Right ventricle myocardium superior (tissue), 1 donor: ENCODE measurements at regions of chr3 and their contacts with region 1.

Region 1: DNA sequence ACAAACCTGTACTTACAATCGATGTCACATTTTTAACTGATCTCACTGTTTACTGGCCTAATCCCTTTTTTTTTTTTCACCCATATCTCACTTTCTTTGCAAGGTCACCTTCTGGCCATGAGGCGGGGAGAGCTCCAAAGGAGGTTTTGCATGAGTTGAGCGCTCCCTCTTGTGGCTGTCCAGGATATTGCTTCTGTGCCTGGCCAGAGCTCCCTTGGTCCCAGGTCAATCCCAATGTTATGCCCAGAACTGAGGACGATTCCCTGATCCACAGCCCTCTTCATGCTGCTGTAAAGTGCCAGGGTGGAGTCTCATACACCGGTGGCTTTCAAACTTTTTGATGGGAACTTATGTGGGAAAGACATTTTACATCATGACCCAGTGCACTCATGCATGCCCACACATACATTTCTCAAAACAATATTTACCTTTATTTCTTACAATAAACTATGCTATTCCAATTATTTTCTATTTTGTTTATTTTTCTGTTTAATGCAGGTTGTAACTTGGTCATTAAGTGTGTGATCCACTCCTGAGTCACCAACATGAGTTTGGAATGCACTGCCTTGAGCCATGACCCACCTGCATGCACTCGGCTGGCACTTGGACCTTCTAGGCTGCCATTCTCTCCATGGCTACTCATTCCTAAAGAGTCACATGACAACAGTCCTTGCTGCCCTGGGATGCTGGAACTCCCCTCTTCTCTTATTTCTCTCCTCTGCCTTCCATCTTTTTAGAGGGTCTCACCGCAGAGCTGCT is 9.6 kb upstream of the SST start:
- DNase-seq: peak; percentile 81
- ATAC-seq: peak; percentile 98

Region 2: GRCh38 chr3:187112934-187113793 is 566.7 kb before region 1 on chr3:
- intact Hi-C with region 1: loop called (anchors 10 kb)
- DNase-seq: no peak
- ATAC-seq: no peak

Region 3: DNA sequence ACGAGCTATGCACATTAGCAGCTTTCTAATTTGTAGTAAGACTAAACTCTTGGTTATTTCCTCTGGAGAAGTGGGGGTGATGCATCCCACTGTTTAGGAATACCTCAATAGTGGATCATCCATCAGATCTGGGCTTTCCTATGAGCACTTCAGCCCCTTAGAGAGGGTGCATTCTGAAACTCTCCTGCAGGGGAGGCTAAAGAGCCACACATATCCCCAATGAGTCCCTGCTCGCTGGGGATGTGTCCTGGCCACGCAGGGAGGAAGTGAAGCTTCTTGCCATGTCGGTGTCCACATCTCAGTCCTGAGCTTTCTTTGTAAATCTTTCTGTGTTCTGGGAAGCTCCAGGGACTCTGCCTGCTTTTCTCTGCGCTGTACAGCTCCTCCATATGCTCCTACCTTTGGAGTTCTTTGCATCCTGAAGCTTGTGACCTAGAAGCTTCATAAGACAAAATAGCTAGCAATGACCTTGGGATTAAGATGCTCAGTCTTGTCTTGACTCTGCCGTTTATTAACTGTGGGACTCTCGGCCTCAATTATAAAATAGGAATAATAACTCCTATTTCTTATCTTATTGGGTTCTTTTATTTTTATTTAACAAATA is 360.0 kb before region 1 on chr3:
- intact Hi-C with region 1: loop called (anchors 2 kb)
- DNase-seq: peak; percentile 64
- ATAC-seq: peak; percentile 96

Region 4: GRCh38 chr3:187567661-187568121 is 112.1 kb before region 1 on chr3:
- intact Hi-C with region 1: no loop called
- DNase-seq: no peak
- ATAC-seq: peak; percentile 67